PC-3 (cell line): ENCODE measurements at regions of chr5 and their contacts with region 1.

Region 1: DNA sequence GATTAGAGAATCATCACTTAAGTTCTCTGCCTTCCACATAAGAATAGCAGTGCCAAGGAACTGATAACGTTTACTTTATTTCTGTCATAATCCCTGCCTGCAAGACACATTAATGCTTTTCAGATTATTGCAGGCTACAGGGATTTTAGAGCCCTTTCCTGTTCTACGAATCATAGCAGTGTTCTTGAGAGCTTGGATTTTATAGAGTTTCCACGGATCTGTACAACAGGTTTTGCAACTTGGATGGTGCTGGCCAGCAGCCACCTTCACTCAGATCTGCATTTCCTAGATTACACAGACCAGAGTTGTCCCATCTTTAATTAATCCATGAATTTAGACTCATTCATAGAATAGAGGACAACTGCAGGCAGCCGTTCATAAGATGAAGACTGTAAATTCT is 38.1 kb downstream of the SLC12A2 start:
- DNase-seq: peak; percentile 86
- ATAC-seq: peak; percentile 87
- H3K4me3 ChIP-seq: no peak overlapping the region
- H3K27ac ChIP-seq: no peak overlapping the region
- H3K4me1 ChIP-seq: peaks cover 16% of the 10 kb centered on the region
- H3K27me3 ChIP-seq: no peaks in the 10 kb centered on the region
- CTCF ChIP-seq: no peak

Region 2: GRCh38 chr5:128174951-128175350 is 53.3 kb after region 1 on chr5:
- CTCF ChIA-PET with region 1: no interaction called
- POLR2A ChIA-PET with region 1: no interaction called
- intact Hi-C with region 1: loop called (anchors 10 kb)
- DNase-seq: no peak
- ATAC-seq: no peak
- H3K4me3 ChIP-seq: no peak overlapping the region
- H3K27ac ChIP-seq: no peak overlapping the region
- H3K4me1 ChIP-seq: no peaks in the 10 kb centered on the region
- H3K27me3 ChIP-seq: no peaks in the 10 kb centered on the region
- CTCF ChIP-seq: no peak